Panc1 (cell line): ENCODE measurements at regions of chr3 and their contacts with region 1.

Region 1: DNA sequence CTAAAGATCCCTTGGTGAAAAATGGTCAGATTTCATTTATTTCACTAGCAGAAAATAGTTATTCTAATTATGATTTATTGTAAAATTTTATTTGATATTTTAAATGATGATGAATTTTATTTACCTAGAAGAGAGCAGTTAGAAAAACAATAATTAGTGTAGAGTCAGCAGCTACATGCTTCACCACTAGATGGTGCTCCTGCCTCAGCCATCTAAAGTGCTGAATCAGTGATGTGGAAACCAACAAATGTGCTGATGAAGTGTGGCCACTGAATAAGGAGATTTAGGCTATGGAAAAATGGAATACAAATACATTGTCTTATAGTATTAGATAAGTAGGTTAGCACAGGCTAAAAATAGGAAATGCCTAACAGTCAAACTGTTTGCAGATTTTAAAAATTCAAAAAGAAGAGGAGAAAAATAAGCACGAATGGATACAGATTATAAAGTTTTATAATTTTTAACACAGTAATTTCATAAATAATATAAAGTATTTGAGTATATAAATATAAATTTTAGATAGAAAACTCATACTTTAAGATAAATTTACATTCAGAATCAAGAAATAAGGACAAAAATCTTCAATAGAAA is 109.8 kb downstream of the PPP2R3A start:
- DNase-seq: peak; percentile 69
- ATAC-seq: peak; percentile 79
- H3K4me3 ChIP-seq: no peak overlapping the region
- H3K27ac ChIP-seq: no peak overlapping the region
- H3K4me1 ChIP-seq: peaks cover 15% of the 10 kb centered on the region
- H3K27me3 ChIP-seq: no peaks in the 10 kb centered on the region
- CTCF ChIP-seq: peak; percentile 90; the same call in 1 of the 2 replicates

Region 2: DNA sequence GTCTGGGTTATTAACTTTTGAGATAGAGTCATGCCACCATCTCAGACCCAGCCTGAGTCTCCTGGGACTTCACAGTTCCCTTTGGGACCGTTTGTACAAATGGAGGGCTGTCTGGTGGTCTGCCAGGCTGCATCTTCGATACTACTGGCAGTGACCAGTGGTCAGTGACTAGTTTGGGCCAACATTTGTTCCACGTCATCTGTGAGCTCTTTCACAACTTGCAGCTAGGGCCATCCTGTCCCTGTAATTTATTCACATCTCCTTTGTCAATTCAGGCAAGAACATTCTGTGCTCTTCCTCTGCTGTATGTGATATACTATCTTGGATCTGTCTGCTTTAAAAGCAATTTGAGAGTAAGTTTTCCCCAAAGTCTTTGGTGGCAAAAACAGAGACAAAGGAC is 926.9 kb before region 1 on chr3:
- CTCF ChIA-PET with region 1: no interaction called
- POLR2A ChIA-PET with region 1: no interaction called
- in situ Hi-C with region 1: no loop called
- intact Hi-C with region 1: no loop called
- DNase-seq: no peak
- ATAC-seq: no peak
- H3K4me3 ChIP-seq: no peak overlapping the region
- H3K27ac ChIP-seq: no peak overlapping the region
- H3K4me1 ChIP-seq: no peaks in the 10 kb centered on the region
- H3K27me3 ChIP-seq: 0 out of 2 replicates have a peak, but pooled peaks cover 6% of the 10 kb centered on the region
- CTCF ChIP-seq: no peak

Region 3: DNA sequence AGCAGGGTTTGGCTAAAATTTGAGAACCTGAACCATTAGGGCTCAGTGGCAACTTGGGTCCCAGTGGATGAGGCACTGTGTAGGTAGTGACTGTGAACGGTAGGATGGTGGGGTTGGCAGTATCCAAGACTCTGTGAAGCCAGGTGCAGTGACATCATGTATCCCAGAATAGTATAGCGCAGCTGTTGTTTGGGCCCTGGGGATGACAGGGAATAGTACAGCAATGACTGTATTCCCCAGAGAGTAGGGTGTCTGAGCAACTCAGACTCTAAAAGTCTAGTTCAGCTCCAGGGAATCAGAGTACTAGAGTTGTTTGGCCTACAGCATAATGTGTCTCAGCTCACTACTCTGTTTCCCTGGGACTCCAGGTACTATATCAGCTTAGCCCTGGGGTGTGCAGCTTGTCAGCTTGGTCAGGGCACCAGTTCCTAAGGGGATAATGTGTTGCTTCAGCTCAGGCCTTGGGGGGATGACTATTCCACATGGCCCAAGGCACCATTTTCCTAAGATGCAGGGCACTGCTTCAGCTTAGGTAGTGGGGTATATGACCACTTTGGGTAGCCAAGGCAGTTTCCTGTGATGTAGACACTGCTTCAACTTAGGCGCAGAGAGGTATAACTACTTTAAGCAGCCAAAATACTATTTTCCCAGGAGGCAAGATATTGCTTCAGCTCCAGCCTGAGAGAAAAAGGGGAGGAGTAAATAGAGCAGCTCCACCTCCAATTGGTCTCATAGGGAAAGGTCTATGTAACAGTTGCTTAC is 130.3 kb before region 1 on chr3:
- CTCF ChIA-PET with region 1: interaction called, 10 read pairs
- POLR2A ChIA-PET with region 1: no interaction called
- in situ Hi-C with region 1: no loop called
- intact Hi-C with region 1: no loop called
- DNase-seq: no peak
- ATAC-seq: no peak
- H3K4me3 ChIP-seq: no peak overlapping the region
- H3K27ac ChIP-seq: no peak overlapping the region
- H3K4me1 ChIP-seq: no peaks in the 10 kb centered on the region
- H3K27me3 ChIP-seq: peaks cover 4% of the 10 kb centered on the region; the same call in 1 of the 2 replicates
- CTCF ChIP-seq: no peak

Region 4: GRCh38 chr3:136249593-136250225 is 174.4 kb after region 1 on chr3:
- CTCF ChIA-PET with region 1: interaction called, 3 read pairs
- POLR2A ChIA-PET with region 1: no interaction called
- in situ Hi-C with region 1: no loop called
- intact Hi-C with region 1: loop called (anchors 10 kb)
- DNase-seq: no peak
- ATAC-seq: no peak
- H3K4me3 ChIP-seq: peak overlapping the region; percentile 62 to 79
- H3K27ac ChIP-seq: peak overlapping the region; percentile 84
- H3K4me1 ChIP-seq: peaks cover 8% of the 10 kb centered on the region
- H3K27me3 ChIP-seq: no peaks in the 10 kb centered on the region
- CTCF ChIP-seq: no peak

Region 5: DNA sequence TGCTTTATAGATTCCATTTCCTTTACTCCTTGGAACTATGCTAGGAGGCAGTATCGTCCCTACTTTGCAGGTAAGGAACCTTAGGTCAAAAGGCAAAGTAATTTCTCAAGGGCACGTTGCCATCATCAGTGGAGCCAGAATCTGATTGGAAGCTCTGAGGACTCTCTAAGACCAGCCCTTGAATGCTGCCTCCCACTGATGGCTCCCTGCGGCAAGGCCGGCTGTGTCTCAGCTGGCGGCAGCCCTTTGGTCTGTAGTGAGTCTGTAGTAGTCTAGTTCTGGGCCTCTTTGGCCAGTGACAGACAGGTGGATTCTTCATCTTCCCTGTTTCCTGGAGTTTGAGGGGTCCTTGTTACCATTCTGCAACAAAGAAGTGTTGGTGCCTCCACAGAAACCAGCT is 251.0 kb after region 1 on chr3:
- CTCF ChIA-PET with region 1: no interaction called
- POLR2A ChIA-PET with region 1: no interaction called
- in situ Hi-C with region 1: no loop called
- intact Hi-C with region 1: loop called (anchors 10 kb)
- DNase-seq: no peak
- ATAC-seq: no peak
- H3K4me3 ChIP-seq: no peak overlapping the region
- H3K27ac ChIP-seq: no peak overlapping the region
- H3K4me1 ChIP-seq: no peaks in the 10 kb centered on the region
- H3K27me3 ChIP-seq: no peaks in the 10 kb centered on the region
- CTCF ChIP-seq: no peak

Region 6: GRCh38 chr3:136390574-136390973 is 315.3 kb after region 1 on chr3:
- CTCF ChIA-PET with region 1: no interaction called
- POLR2A ChIA-PET with region 1: no interaction called
- in situ Hi-C with region 1: no loop called
- intact Hi-C with region 1: loop called (anchors 2 kb)
- DNase-seq: no peak
- ATAC-seq: no peak
- H3K4me3 ChIP-seq: no peak overlapping the region
- H3K27ac ChIP-seq: no peak overlapping the region
- H3K4me1 ChIP-seq: no peaks in the 10 kb centered on the region
- H3K27me3 ChIP-seq: no peaks in the 10 kb centered on the region
- CTCF ChIP-seq: no peak

Region 7: GRCh38 chr3:137013955-137014688 is 938.8 kb after region 1 on chr3:
- CTCF ChIA-PET with region 1: interaction called, 3 read pairs
- POLR2A ChIA-PET with region 1: no interaction called
- in situ Hi-C with region 1: no loop called
- intact Hi-C with region 1: loop called (anchors 2 kb)
- DNase-seq: peak; percentile 83
- ATAC-seq: peak; percentile 97
- H3K4me3 ChIP-seq: peak overlapping the region; percentile 40 to 84
- H3K27ac ChIP-seq: peak overlapping the region; percentile 55
- H3K4me1 ChIP-seq: peaks cover 3% of the 10 kb centered on the region
- H3K27me3 ChIP-seq: no peaks in the 10 kb centered on the region
- CTCF ChIP-seq: peak; percentile 92